ENCODE measurements at regions of chr6 and their contacts with region 1.

Region 1: DNA sequence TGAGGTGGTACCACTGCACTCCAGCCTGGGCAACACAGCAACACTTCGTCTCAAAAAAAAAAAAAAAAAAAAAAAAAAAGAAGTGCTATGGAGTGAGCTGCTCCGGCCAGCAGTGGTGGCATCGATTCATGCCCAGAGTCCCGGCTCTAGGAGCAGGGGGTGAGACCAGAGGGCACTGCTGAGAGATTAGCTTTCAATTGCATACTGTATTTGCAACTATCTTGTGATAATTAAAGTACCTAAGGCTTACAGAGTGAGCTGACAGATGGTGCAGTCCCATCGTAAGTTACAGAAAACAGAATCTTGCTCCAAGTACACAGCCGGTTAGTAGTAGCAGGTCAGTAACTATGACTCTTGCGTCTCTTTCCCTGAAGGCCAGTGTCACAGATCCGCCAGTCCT is 31.5 kb downstream of the TMEM14B start:
- DNase-seq: no peak
- H3K4me3 ChIP-seq: no peak overlapping the region
- H3K27ac ChIP-seq: no peak overlapping the region
- H3K4me1 ChIP-seq: no peaks in the 10 kb centered on the region
- H3K27me3 ChIP-seq: no peaks in the 10 kb centered on the region
- CTCF ChIP-seq: no peak

Region 2: GRCh38 chr6:10528170-10528981 is 250.7 kb before region 1 on chr6:
- CTCF ChIA-PET with region 1: no interaction called
- POLR2A ChIA-PET with region 1: interaction called, 25 read pairs
- intact Hi-C with region 1: no loop called
- DNase-seq: peak; percentile 56 to 91
- H3K4me3 ChIP-seq: peak overlapping the region; percentile 76
- H3K27ac ChIP-seq: peak overlapping the region; percentile 99
- H3K4me1 ChIP-seq: peaks cover 30% of the 10 kb centered on the region
- H3K27me3 ChIP-seq: no peaks in the 10 kb centered on the region
- CTCF ChIP-seq: no peak

Region 3: GRCh38 chr6:10542213-10542612 is 236.9 kb before region 1 on chr6:
- CTCF ChIA-PET with region 1: no interaction called
- POLR2A ChIA-PET with region 1: no interaction called
- intact Hi-C with region 1: no loop called
- DNase-seq: no peak
- H3K4me3 ChIP-seq: no peak overlapping the region
- H3K27ac ChIP-seq: no peak overlapping the region
- H3K4me1 ChIP-seq: no peaks in the 10 kb centered on the region
- H3K27me3 ChIP-seq: no peaks in the 10 kb centered on the region
- CTCF ChIP-seq: no peak